ENCODE measurements at regions of chr22 and their contacts with region 1.

Region 1: DNA sequence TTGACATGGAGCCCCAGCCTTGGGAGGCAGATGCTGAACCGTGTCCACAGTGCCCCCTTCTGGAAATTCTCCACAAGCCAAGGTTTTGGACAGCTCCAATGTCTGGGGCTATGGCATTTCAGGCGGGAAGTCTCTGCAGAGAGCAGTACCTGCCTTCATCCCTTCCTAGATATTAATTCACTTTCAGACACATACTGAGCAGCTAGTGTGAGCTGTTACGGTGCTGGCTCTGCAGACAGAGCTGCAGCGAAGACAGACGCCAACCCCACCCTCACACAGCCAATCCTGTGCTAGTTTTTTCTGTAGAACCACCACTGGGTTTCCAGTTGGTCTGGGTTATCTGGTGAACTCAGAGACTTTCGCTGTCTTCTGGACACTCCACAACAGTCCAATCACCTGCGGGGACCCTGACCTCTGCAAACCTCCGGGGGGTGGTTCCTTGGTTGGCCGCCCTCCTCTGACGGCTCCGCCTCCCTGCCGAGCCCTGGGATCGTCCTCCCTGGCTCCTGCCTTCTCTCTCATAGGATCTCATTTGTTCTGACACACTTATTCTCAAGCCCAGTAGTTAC is 9.1 kb downstream of the LMF2 start:
- DNase-seq: peak; percentile 77
- H3K4me3 ChIP-seq: no peak overlapping the region; a peak in 1 of 4 replicates
- H3K27ac ChIP-seq: no peak overlapping the region
- H3K4me1 ChIP-seq: no peaks in the 10 kb centered on the region; a peak in 1 of 4 replicates
- H3K27me3 ChIP-seq: no peaks in the 10 kb centered on the region
- CTCF ChIP-seq: peak; percentile 69
- EP300 ChIP-seq: no peak
- RAD21 ChIP-seq: peak; percentile 77

Region 2: DNA sequence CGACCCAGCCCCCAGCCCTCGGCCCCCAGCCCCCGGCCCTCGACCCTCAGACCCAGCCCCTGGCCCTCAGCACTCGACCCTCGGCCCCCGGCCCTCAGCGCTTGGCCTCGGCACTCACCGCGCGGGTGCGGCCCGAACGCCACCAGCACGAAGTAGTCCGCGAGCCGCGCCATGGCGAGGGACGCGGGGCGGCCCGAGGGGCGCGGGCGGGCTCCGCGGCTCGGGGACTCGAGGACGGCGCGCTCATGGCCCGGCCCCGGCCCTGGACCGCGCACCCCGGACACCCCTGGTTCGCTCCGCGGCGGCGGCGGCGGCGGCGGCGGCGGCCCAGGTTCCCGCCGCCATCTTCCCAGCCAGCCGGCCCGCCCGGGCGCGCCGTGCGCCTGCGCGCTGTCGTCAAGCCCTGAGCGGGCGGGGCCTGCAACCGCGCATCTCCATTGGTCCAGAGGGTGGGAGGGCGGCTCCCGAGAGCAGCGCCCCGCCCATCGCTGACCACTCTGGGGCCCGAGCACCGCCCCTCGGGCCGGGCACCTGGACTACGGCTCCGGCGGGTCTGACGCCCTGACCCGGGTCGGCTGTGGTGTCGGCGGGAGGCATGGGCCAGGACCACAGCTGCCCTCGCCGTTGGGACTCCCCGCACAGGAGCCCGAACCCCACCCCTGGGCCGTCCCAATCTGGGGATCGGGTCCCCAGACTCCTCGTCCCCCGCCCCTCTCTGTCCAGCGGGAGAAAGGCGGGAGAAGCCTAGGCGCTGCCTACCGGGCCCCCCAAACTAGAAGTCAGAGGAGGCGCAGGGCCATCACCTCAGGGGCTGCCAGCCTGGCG is 23.5 kb before region 1 on chr22 and contains the start of gene SBF1:
- CTCF ChIA-PET with region 1: interaction called, 24 read pairs
- POLR2A ChIA-PET with region 1: no interaction called
- DNase-seq: peak; percentile 100
- H3K4me3 ChIP-seq: peak within 1 kb of the TSS; percentile 77 to 88
- H3K27ac ChIP-seq: peak within 1 kb of the TSS; percentile 38 to 72; a peak in 2 of 4 replicates
- H3K4me1 ChIP-seq: peaks cover 1 to 39% of the 10 kb centered on the region in 2 experiments; a peak in 2 of 4 replicates
- H3K27me3 ChIP-seq: no peaks in the 10 kb centered on the region
- CTCF ChIP-seq: no peak
- EP300 ChIP-seq: no peak
- RAD21 ChIP-seq: no peak
- polyA plus RNA-seq, gene SBF1: 24.2 and 29.1 TPM in 2 replicates

Region 3: GRCh38 chr22:50485201-50486131 is 12.9 kb before region 1 on chr22:
- CTCF ChIA-PET with region 1: interaction called, 12 read pairs
- POLR2A ChIA-PET with region 1: no interaction called
- DNase-seq: no peak
- H3K4me3 ChIP-seq: no peak overlapping the region
- H3K27ac ChIP-seq: no peak overlapping the region
- H3K4me1 ChIP-seq: peaks cover 0 to 2% of the 10 kb centered on the region in 2 experiments; a peak in 1 of 4 replicates
- H3K27me3 ChIP-seq: peaks cover 6% of the 10 kb centered on the region; the same call in 1 of the 2 replicates
- CTCF ChIP-seq: no peak
- EP300 ChIP-seq: no peak
- RAD21 ChIP-seq: no peak

Region 4: GRCh38 chr22:50640857-50641647 is 142.6 kb after region 1 on chr22:
- CTCF ChIA-PET with region 1: no interaction called
- POLR2A ChIA-PET with region 1: no interaction called
- DNase-seq: no peak
- H3K4me3 ChIP-seq: no peak overlapping the region
- H3K27ac ChIP-seq: no peak overlapping the region
- H3K4me1 ChIP-seq: no peaks in the 10 kb centered on the region
- H3K27me3 ChIP-seq: peaks cover 28% of the 10 kb centered on the region
- CTCF ChIP-seq: no peak
- EP300 ChIP-seq: no peak
- RAD21 ChIP-seq: no peak

Measured in SK-N-SH (cell line).